Activated CD4-positive, alpha-beta T cell treated with anti-CD3 and anti-CD28 coated beads for 36 hours (primary cell): ENCODE measurements at regions of chr3 and their contacts with region 1.

Region 1: GRCh38 chr3:128153156-128154041 is at the start of gene EEFSEC:
- DNase-seq: peak; percentile 91
- ATAC-seq: peak; percentile 95
- H3K4me3 Mint-ChIP-seq: peak within 1 kb of the TSS; percentile 80
- H3K27ac Mint-ChIP-seq: peak within 1 kb of the TSS; percentile 85
- H3K4me1 Mint-ChIP-seq: peaks cover 25% of the 10 kb centered on the region
- H3K27me3 Mint-ChIP-seq: no peaks in the 10 kb centered on the region
- total RNA-seq, gene EEFSEC: 19.6 to 20.7 TPM

Region 2: DNA sequence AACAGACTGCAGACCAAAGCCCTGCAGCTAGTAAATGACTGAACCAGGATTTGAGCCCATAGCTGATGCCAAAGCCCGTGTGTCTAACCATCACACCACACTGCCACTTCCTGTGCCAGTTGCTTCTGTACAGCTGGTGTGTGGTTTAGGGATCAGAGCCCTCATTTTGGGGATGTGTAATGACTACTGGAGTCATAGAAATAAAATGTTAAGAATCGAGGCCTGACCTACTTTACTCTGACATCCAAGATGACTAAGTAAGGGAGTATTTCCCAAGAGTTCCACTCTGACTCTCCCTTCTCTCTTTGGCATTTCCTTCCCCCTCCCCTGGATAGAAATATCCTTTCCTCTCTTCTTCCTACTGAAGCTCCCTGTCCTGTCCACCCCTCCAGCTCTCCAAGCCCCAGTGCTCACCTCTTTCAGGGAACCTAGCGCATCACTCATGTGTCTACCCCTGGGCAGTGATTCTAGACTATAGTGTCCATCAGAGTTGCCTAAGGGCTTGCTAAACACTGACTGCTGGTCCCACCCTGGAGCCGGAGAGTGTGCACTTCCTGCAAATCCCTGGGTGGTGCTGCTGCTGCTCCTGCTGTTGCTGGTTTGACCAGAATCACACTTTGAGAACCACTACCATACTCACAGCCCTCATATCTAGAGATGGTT is 384.9 kb before region 1 on chr3:
- CTCF ChIA-PET with region 1: no interaction called
- POLR2A ChIA-PET with region 1: no interaction called
- intact Hi-C with region 1: no loop called
- DNase-seq: no peak
- ATAC-seq: no peak
- H3K4me3 Mint-ChIP-seq: no peak overlapping the region
- H3K27ac Mint-ChIP-seq: no peak overlapping the region
- H3K4me1 Mint-ChIP-seq: peaks cover 3% of the 10 kb centered on the region
- H3K27me3 Mint-ChIP-seq: no peaks in the 10 kb centered on the region

Region 3: GRCh38 chr3:127857333-127857732 is 296.1 kb before region 1 on chr3:
- CTCF ChIA-PET with region 1: no interaction called
- POLR2A ChIA-PET with region 1: no interaction called
- intact Hi-C with region 1: no loop called
- DNase-seq: no peak
- ATAC-seq: no peak
- H3K4me3 Mint-ChIP-seq: no peak overlapping the region
- H3K27ac Mint-ChIP-seq: no peak overlapping the region
- H3K4me1 Mint-ChIP-seq: no peaks in the 10 kb centered on the region
- H3K27me3 Mint-ChIP-seq: no peaks in the 10 kb centered on the region

Region 4: DNA sequence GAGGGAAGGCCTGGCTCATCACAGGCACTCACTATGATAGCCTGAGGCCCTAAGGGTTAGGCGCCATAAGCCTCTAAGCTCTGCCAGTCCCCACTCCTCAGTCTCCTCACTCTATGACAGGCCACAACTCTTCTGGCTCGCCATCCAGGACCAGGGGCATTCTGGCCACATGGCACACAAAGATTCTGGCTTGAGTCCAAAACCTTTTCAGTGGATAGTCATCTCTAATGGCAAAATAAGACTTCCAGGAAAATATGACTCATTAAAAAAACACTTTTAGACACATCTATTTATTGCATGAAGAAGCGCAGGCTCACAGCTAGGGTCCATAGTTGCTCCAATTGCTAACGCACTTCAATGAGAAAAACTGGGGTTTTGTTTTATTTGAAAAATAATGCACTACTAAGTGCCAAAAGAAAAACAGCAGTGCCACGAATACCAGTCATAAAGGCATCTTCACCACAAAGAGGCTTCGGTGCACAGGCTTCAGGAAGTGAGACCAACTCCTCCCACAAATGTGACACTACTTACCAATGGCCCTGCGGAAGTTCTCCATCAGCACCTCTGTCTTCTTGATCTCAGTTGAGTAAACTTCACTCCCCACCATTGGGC is 40.9 kb before region 1 on chr3:
- CTCF ChIA-PET with region 1: no interaction called
- POLR2A ChIA-PET with region 1: no interaction called
- intact Hi-C with region 1: loop called in 1 of 2 experiments (anchors 5 kb)
- DNase-seq: peak; percentile 65
- ATAC-seq: peak; percentile 95
- H3K4me3 Mint-ChIP-seq: peak overlapping the region; percentile 15
- H3K27ac Mint-ChIP-seq: peak overlapping the region; percentile 93
- H3K4me1 Mint-ChIP-seq: peaks cover 47% of the 10 kb centered on the region
- H3K27me3 Mint-ChIP-seq: no peaks in the 10 kb centered on the region

Region 5: DNA sequence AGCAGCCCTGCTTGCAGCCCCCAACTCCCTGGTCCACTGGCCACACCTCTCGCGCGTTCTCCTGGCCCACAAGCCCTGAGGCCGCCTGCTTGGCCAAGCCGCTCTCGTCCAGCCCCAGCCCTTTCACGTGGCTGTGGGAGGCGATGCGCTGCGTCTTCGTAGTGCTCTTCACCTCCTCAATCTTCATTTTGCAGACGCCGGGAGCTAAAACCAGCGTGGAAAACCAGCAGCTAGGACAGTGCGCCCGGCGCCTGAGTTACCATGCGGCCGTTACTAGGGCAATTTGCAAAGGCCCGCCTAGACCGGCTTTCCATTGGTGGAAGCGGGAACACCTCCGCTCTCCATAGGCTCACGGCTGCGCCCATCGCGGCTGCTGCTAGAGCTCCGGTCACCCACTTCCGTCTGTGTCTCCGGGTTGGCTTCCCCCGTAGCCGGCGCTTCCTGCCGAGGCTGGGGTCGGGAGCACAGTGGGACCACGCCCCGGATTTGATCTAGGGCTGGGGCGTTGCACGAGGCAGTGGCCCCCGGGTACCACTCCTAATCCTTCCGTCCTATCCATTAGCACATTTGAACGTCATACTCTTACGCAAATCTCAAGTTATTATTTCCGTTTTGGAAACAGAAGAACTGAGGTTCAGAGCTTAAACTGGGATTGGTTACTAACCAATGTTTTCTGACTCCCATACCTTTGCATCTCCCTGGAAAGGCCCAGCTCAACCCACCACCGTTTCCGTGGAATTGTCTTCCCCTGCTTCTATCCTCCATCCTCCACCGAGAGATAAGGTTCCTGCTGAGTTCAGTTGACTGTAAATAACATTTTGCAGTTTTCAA is 29.6 kb before region 1 on chr3 and contains the start of gene RUVBL1:
- CTCF ChIA-PET with region 1: interaction called, 7 read pairs
- POLR2A ChIA-PET with region 1: interaction called, 13 read pairs
- intact Hi-C with region 1: loop called (anchors 1 kb)
- DNase-seq: peak; percentile 99
- ATAC-seq: peak; percentile 99
- H3K4me3 Mint-ChIP-seq: peak within 1 kb of the TSS; percentile 99
- H3K27ac Mint-ChIP-seq: peak within 1 kb of the TSS; percentile 96
- H3K4me1 Mint-ChIP-seq: peaks cover 30% of the 10 kb centered on the region
- H3K27me3 Mint-ChIP-seq: no peaks in the 10 kb centered on the region
- total RNA-seq, gene RUVBL1: 97.0 to 99.9 TPM